Dendritic cell treated with granulocyte-macrophage colony-stimulating factor and Interleukin-4, amounts not matched to agents 40 ng/mL and 50 ng/mL, for 4 days (primary cell): ENCODE measurements at regions of chr19 and their contacts with region 1.

Region 1: DNA sequence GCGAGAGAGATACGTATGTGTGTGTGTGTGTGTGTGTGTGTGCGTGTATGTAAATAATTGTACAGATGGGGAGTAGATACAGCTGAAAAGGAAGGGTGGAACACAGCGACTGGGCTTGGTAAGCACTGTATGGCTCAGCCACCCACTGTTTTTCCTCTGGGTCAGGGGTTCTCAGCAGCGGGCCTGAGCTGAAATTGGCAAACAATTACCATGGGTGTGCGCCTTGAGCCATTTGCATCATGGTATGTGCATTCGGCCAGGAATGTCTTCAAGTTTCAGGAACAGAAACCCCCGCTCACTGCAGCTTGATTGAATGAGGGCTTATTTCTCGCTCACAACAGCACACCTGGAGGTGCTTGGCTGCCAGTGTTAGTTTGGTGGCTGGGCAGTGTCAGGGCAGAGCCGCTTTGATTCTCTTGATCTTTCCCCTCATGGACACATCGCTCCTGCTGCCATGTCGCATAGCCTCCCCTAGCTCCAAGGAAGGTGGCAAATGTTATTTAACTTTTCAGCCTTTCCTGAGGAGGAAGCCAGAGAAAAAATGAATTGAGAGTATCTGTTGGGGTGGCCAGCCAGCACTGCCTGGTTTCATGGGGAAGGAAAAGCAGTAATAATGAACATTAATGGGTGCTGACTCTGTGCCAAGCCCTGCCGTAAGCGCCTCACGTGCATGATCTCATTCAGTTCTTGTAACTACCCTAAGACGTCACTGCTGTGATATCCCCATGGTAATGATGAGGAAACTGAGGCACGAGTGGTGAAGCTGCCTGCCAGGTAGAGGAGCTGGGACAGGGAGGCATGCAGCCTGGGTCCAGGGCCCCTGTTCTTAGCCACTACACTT is 126.9 kb downstream of the SIPA1L3 start:
- H3K4me3 Mint-ChIP-seq: peak overlapping the region; percentile 17
- H3K27ac Mint-ChIP-seq: peak overlapping the region; percentile 80
- H3K4me1 Mint-ChIP-seq: peaks cover 67% of the 10 kb centered on the region
- H3K27me3 Mint-ChIP-seq: peaks cover 9% of the 10 kb centered on the region

Region 2: GRCh38 chr19:37953533-37954303 is 80.2 kb before region 1 on chr19:
- intact Hi-C with region 1: loop called (anchors 10 kb)
- H3K4me3 Mint-ChIP-seq: no peak overlapping the region
- H3K27ac Mint-ChIP-seq: peak overlapping the region; percentile 68
- H3K4me1 Mint-ChIP-seq: peaks cover 53% of the 10 kb centered on the region
- H3K27me3 Mint-ChIP-seq: no peaks in the 10 kb centered on the region

Region 3: GRCh38 chr19:38049105-38049649 is 15.3 kb after region 1 on chr19:
- intact Hi-C with region 1: loop called (anchors 2 kb)
- H3K4me3 Mint-ChIP-seq: peak overlapping the region; percentile 37
- H3K27ac Mint-ChIP-seq: peak overlapping the region; percentile 89
- H3K4me1 Mint-ChIP-seq: peaks cover 62% of the 10 kb centered on the region
- H3K27me3 Mint-ChIP-seq: no peaks in the 10 kb centered on the region

Region 4: GRCh38 chr19:38068826-38069225 is 34.9 kb after region 1 on chr19:
- intact Hi-C with region 1: no loop called
- H3K4me3 Mint-ChIP-seq: no peak overlapping the region
- H3K27ac Mint-ChIP-seq: no peak overlapping the region
- H3K4me1 Mint-ChIP-seq: peaks cover 35% of the 10 kb centered on the region
- H3K27me3 Mint-ChIP-seq: no peaks in the 10 kb centered on the region

Region 5: DNA sequence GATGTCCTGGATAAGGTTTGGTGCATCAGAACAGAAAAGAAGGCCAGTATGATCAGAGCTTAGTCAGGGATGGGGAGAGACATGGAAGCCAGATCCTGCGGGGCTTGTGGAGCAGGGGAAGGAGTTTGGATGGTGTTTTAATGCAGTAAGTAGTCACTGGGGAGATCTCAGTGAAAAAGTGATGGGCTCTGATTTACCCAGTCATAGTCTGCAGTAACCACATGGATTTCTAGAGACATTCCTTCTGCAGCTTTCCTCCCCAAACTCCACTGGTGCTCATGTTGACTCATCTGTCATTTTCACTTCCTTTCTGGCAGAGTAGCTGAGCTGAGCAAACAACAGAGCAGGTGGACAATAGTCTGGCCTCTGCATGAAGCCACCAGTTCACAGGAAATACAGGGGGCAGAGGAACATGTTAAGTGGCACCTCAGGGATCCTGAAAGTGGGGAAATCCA is 46.1 kb after region 1 on chr19:
- intact Hi-C with region 1: loop called (anchors 5 kb)
- H3K4me3 Mint-ChIP-seq: no peak overlapping the region
- H3K27ac Mint-ChIP-seq: peak overlapping the region; percentile 88
- H3K4me1 Mint-ChIP-seq: peaks cover 29% of the 10 kb centered on the region
- H3K27me3 Mint-ChIP-seq: no peaks in the 10 kb centered on the region